ENCODE measurements at regions of chr7 and their contacts with region 1.

Region 1: GRCh38 chr7:22559829-22560489 is 60.0 kb upstream of the STEAP1B start:
- DNase-seq: peak; percentile 81
- H3K4me3 Mint-ChIP-seq: no peak overlapping the region
- H3K27ac Mint-ChIP-seq: no peak overlapping the region
- H3K4me1 Mint-ChIP-seq: peaks cover 28% of the 10 kb centered on the region
- H3K27me3 Mint-ChIP-seq: peaks cover 7% of the 10 kb centered on the region

Region 2: DNA sequence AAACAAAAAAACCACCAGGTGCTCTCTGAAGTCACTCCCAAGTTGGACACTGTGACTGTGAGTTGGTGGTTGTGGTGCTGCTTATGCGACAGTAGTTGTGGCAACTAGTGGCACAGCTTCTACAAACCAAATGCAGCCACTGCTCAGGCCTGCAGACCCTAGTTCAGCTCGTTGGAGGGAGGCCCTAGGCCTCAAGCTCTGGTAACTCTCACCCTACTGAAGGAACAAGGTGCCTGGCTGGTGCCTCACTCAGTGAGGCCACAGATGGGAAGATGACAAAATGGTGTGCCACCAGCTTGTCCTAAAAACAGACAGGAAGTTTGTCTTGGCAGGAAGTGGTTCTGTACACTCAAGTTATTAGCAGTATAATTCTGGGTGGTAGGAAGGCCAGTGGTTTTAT is 157.7 kb before region 1 on chr7:
- CTCF ChIA-PET with region 1: no interaction called
- intact Hi-C with region 1: no loop called
- DNase-seq: no peak
- H3K4me3 Mint-ChIP-seq: no peak overlapping the region
- H3K27ac Mint-ChIP-seq: no peak overlapping the region
- H3K4me1 Mint-ChIP-seq: peaks cover 3% of the 10 kb centered on the region
- H3K27me3 Mint-ChIP-seq: no peaks in the 10 kb centered on the region

Region 3: GRCh38 chr7:22672846-22673652 is 113.1 kb after region 1 on chr7:
- CTCF ChIA-PET with region 1: interaction called, 9 read pairs
- intact Hi-C with region 1: loop called (anchors 5 kb)
- DNase-seq: no peak
- H3K4me3 Mint-ChIP-seq: no peak overlapping the region
- H3K27ac Mint-ChIP-seq: no peak overlapping the region
- H3K4me1 Mint-ChIP-seq: peaks cover 64% of the 10 kb centered on the region
- H3K27me3 Mint-ChIP-seq: no peaks in the 10 kb centered on the region

Region 4: DNA sequence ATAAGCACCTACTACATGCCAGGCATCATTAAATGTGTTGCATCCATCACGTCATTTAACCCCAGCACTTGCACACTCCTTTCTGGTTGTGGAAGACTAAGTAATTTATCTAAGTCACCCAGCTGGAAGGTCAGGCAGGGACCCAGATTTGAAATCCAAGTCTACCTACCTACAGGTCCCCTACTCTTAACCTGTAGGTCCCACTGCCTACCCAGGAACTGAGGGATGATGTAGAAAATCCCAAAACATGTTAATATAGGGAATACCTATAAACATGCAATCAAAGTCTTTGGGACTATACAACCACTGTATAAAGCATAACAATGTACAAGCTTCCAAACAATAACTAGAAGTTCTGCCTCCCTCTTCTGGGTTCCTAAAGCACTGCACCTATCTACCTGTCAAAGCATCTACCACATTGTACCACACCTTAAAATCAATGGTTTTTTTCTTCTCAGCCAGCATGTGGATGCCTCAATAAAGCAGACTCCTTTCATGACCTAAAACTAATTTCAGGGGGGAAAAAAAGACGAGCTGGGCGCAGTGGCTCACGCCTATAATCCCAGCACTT is 172.7 kb after region 1 on chr7:
- CTCF ChIA-PET with region 1: interaction called, 331 read pairs
- intact Hi-C with region 1: no loop called
- DNase-seq: no peak
- H3K4me3 Mint-ChIP-seq: no peak overlapping the region
- H3K27ac Mint-ChIP-seq: no peak overlapping the region
- H3K4me1 Mint-ChIP-seq: peaks cover 2% of the 10 kb centered on the region
- H3K27me3 Mint-ChIP-seq: peaks cover 31% of the 10 kb centered on the region

Region 5: GRCh38 chr7:22782616-22783232 is 222.8 kb after region 1 on chr7:
- CTCF ChIA-PET with region 1: interaction called, 91 read pairs
- intact Hi-C with region 1: loop called (anchors 1 kb)
- DNase-seq: peak; percentile 88
- H3K4me3 Mint-ChIP-seq: no peak overlapping the region
- H3K27ac Mint-ChIP-seq: no peak overlapping the region
- H3K4me1 Mint-ChIP-seq: no peaks in the 10 kb centered on the region
- H3K27me3 Mint-ChIP-seq: no peaks in the 10 kb centered on the region

Measured in activated naive CD4-positive, alpha-beta T cell treated with anti-CD3 and anti-CD28 coated beads for 36 hours (primary cell).